A673 (cell line): ENCODE measurements at regions of chr9 and their contacts with region 1.

Region 1: GRCh38 chr9:113246928-113247327 is 25.6 kb downstream of the SLC31A1 start:
- DNase-seq: no peak
- H3K4me3 ChIP-seq: no peak overlapping the region
- H3K27ac ChIP-seq: no peak overlapping the region
- H3K4me1 ChIP-seq: peaks cover 17% of the 10 kb centered on the region
- H3K27me3 ChIP-seq: no peaks in the 10 kb centered on the region
- CTCF ChIP-seq: no peak

Region 2: DNA sequence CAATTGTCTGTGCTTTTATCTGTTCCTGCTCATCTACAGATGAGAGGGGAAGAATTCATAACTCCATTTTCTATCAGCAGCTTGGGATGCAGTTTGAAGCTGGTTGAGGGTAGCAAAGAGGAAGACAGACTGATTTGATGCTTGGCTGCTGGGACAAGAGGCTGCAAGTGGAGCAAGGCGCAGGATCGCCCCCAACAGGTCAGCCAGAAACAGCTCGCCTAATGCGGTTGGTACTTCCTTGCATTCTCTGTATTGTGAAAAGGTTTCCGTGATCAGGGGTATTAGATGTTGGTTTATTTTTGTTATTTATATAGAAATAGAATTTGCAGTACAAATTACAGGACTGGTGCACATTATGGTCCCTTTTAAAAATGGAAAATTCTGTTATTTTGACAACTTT is 275.5 kb before region 1 on chr9:
- CTCF ChIA-PET with region 1: no interaction called
- POLR2A ChIA-PET with region 1: no interaction called
- intact Hi-C with region 1: no loop called
- DNase-seq: peak; percentile 36
- H3K4me3 ChIP-seq: no peak overlapping the region
- H3K27ac ChIP-seq: no peak overlapping the region
- H3K4me1 ChIP-seq: no peaks in the 10 kb centered on the region
- H3K27me3 ChIP-seq: peaks cover 4% of the 10 kb centered on the region
- CTCF ChIP-seq: peak; percentile 53

Region 3: DNA sequence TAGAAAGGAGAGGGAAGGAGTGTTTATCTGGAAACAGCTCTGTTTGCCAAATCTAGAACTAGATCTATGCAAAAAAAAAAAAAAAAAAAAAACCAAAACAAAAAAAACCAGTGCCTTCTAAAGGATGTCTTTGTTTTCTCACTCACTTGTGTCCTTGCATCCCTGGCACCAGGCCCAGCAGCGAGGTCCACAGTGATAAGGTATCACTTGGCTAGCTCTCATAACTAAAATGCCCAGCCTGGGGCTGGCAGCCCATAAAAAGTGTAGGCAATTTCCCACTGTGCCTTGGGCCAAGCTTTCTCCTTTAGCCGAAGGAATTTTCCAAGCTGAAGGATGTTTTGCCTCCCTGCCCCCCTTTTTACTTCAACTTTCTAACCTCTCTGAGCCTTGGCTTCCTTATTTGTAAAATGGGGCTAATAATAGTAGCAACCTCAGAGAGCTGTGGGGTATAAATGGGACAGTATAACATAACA is 237.4 kb after region 1 on chr9:
- CTCF ChIA-PET with region 1: no interaction called
- POLR2A ChIA-PET with region 1: interaction called, 20 read pairs
- intact Hi-C with region 1: no loop called
- DNase-seq: no peak
- H3K4me3 ChIP-seq: no peak overlapping the region
- H3K27ac ChIP-seq: no peak overlapping the region
- H3K4me1 ChIP-seq: no peaks in the 10 kb centered on the region
- H3K27me3 ChIP-seq: no peaks in the 10 kb centered on the region
- CTCF ChIP-seq: no peak